ENCODE measurements at regions of chr10 and their contacts with region 1.

Region 1: DNA sequence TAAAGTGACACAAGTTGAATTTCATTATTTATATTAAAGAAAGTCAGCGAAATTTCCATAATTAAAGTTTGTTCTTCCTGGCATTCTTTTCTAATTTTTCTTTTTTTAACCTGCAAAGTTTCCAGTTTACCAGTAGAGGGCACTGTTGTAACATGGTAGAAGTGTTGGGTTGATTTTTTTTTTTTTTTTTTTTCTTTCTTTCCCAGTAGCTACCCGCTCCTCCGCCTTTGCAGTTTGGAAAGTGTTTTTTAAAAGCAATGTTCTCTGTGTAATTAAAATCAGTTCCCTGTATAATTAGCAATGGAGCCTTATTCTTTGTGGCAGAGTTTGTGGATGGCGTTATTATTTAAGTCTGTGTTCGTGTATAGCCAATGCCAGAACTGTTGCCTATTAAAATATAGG is 53.7 kb downstream of the TAF3 start:
- DNase-seq: peak in 2 of 4 donors; percentile 14 to 28
- ATAC-seq: peak; percentile 76
- H3K4me3 ChIP-seq: no peak overlapping the region
- H3K27ac ChIP-seq: no peak overlapping the region
- H3K4me1 ChIP-seq: no peaks in the 10 kb centered on the region
- H3K27me3 ChIP-seq: no peaks in the 10 kb centered on the region
- CTCF ChIP-seq: peak; percentile 62 to 63

Region 2: DNA sequence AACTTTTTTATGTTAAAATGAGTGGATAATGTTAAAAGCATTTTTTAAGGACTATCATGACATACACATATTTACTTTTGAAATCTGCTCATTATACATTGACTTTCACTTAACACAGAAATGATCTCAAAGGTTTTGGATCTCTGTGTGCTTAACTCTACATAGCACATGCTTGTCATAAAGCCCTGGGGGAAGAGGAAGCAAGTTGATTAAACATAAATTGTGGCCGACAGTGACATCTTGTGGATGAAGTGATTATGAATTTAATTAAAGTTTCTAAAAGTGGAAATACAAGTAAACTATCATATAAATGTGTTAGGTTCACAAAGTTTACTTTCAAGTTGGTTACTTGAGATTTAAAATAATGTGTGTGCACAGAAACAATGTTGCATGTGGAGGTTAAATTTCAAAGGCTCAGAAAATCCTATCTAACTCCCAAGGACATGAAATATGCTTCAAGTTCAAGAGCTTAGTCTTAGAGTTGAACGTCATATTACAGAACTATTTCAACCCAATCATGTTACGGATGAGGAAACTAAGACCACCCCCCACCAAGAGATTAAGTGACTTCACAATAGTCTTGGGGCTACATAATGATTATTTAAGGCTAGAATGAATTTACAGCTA is 1430.2 kb after region 1 on chr10:
- intact Hi-C with region 1: loop called in 1 of 2 experiments (anchors 10 kb)
- DNase-seq: peak in 2 of 4 donors; percentile 48 to 55
- ATAC-seq: peak; percentile 65
- H3K4me3 ChIP-seq: no peak overlapping the region
- H3K27ac ChIP-seq: no peak overlapping the region
- H3K4me1 ChIP-seq: no peaks in the 10 kb centered on the region
- H3K27me3 ChIP-seq: peaks cover 0 to 5% of the 10 kb centered on the region in 2 donors
- CTCF ChIP-seq: peak in 1 of 2 donors; percentile 33